HCT116 (cell line): ENCODE measurements at regions of chr3 and their contacts with region 1.

Region 1: DNA sequence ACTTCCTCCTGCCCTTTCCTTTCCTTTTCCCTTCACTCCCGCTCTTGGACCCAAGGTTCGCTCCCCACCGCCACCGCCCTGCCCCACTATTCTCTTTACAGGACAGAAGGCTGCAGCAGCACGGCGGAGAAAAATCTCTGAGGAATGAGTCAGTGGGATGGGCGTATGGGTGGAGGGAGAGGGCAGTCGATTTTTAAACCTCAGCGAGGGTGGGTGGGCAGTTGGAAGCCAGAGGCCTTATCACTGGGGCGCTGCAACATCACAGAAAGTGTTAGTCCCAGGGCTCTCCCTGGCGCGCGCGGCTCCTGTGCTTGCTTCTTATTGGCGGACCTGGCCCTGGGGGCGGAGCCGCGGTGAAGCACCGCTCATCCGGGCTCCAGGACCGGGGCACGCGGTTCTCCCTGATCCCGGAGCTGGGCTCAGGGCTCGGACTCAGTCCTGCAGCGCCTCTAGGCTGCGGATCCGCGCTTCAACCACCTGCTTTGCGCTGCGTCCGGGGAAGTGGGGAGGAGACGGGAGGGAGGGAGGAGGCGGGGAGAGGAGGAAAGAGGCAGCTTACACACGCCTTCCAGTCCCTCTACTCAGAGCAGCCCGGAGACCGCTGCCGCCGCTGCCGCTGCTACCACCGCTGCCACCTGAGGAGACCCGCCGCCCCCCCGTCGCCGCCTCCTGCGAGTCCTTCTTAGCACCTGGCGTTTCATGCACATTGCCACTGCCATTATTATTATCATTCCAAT is at the start of gene ALCAM:
- DNase-seq: peak; percentile 97
- ATAC-seq: peak; percentile 81
- H3K4me3 ChIP-seq: peak within 1 kb of the TSS; percentile 74 to 91
- H3K27ac ChIP-seq: peak within 1 kb of the TSS; percentile 78
- H3K4me1 ChIP-seq: peaks cover 13 to 49% of the 10 kb centered on the region in 2 experiments; a peak in 3 of 4 replicates
- H3K27me3 ChIP-seq: no peaks in the 10 kb centered on the region
- CTCF ChIP-seq: peak; percentile 52 to 78 (median 58)
- POLR2A ChIP-seq: no peak
- RAD21 ChIP-seq: peak; percentile 97
- total RNA-seq, gene ALCAM: 56.7 TPM

Region 2: GRCh38 chr3:103991461-103992115 is 1374.9 kb before region 1 on chr3:
- CTCF ChIA-PET with region 1: no interaction called
- POLR2A ChIA-PET with region 1: no interaction called
- RAD21 ChIA-PET with region 1: no interaction called
- intact Hi-C with region 1: loop called (anchors 5 kb)
- DNase-seq: peak; percentile 18
- ATAC-seq: peak; percentile 61; the same call in 1 of the 2 replicates
- H3K4me3 ChIP-seq: no peak overlapping the region
- H3K27ac ChIP-seq: no peak overlapping the region
- H3K4me1 ChIP-seq: no peaks in the 10 kb centered on the region
- H3K27me3 ChIP-seq: no peaks in the 10 kb centered on the region
- CTCF ChIP-seq: peak; percentile 34 to 86 (median 68); a peak in 5 of 6 replicates
- POLR2A ChIP-seq: no peak
- RAD21 ChIP-seq: peak; percentile 73

Region 3: GRCh38 chr3:104273046-104273649 is 1093.3 kb before region 1 on chr3:
- CTCF ChIA-PET with region 1: interaction called, 5 read pairs
- POLR2A ChIA-PET with region 1: no interaction called
- RAD21 ChIA-PET with region 1: interaction called in 1 of 2 experiments, 4 read pairs
- intact Hi-C with region 1: loop called (anchors 2 kb)
- DNase-seq: peak; percentile 19
- ATAC-seq: peak; percentile 63
- H3K4me3 ChIP-seq: no peak overlapping the region
- H3K27ac ChIP-seq: no peak overlapping the region
- H3K4me1 ChIP-seq: no peaks in the 10 kb centered on the region
- H3K27me3 ChIP-seq: no peaks in the 10 kb centered on the region
- CTCF ChIP-seq: peak; percentile 25 to 78 (median 68); a peak in 5 of 6 replicates
- POLR2A ChIP-seq: no peak
- RAD21 ChIP-seq: peak; percentile 75

Region 4: GRCh38 chr3:104596551-104596950 is 769.9 kb before region 1 on chr3:
- CTCF ChIA-PET with region 1: interaction called, 8 read pairs
- POLR2A ChIA-PET with region 1: interaction called, 3 read pairs
- RAD21 ChIA-PET with region 1: no interaction called
- intact Hi-C with region 1: loop called (anchors 2 kb)
- DNase-seq: peak; percentile 45
- ATAC-seq: peak; percentile 95
- H3K4me3 ChIP-seq: no peak overlapping the region
- H3K27ac ChIP-seq: no peak overlapping the region
- H3K4me1 ChIP-seq: no peaks in the 10 kb centered on the region
- H3K27me3 ChIP-seq: no peaks in the 10 kb centered on the region
- CTCF ChIP-seq: peak; percentile 38 to 70 (median 49); a peak in 5 of 6 replicates
- POLR2A ChIP-seq: no peak
- RAD21 ChIP-seq: peak; percentile 62

Region 5: DNA sequence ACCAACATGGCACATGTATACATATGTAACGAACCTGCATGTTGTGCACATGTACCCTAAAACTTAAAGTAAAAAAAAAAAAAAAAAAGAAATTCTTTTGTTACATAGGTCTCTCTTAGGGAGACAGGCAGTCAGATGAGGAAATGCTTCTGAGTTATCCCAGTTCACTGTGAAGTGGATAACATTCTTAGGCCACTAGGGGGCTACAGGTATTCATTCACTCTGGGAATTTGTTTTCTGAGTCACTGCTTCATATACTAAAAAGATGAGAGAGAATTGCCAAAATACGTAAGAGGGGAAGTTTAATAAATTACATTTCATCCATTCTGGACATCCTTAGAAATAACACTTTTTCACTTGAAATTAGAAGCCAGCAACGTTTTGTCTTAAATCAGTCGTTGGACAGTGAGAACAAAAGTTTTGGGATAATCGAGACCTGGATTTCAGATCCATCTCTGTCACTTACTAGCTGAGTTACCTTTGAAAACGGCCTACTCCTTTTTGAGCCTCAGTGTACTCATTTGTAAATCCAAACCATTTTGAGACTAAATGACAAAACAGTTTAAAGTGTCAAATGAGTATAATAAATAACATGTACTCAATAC is 738.2 kb before region 1 on chr3:
- CTCF ChIA-PET with region 1: interaction called, 3 read pairs
- POLR2A ChIA-PET with region 1: no interaction called
- RAD21 ChIA-PET with region 1: no interaction called
- intact Hi-C with region 1: loop called (anchors 2 kb)
- DNase-seq: peak; percentile 33
- ATAC-seq: peak; percentile 87
- H3K4me3 ChIP-seq: no peak overlapping the region
- H3K27ac ChIP-seq: no peak overlapping the region
- H3K4me1 ChIP-seq: peaks cover 0 to 13% of the 10 kb centered on the region in 2 experiments; a peak in 3 of 4 replicates
- H3K27me3 ChIP-seq: no peaks in the 10 kb centered on the region
- CTCF ChIP-seq: peak; percentile 39 to 70 (median 68); a peak in 5 of 6 replicates
- POLR2A ChIP-seq: no peak
- RAD21 ChIP-seq: peak; percentile 61

Region 6: DNA sequence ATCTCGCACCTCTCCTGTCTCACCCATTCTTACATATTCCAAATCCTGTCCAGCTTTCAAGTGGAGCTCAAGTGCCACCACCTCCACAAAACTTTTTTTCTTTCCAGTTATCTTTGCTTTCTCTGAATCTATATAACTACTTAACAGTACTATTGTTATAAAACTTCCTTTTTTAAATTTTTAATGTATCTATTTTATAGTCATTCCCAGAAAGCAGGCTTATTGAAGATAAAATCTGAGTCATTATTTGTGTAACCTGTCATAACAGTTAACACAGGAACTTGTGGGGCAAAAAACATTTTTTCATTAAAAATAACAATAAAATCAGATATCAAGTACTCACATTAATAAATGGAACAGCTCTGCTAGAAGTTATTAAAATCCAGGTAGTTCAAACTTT is 73.1 kb before region 1 on chr3:
- CTCF ChIA-PET with region 1: no interaction called
- POLR2A ChIA-PET with region 1: no interaction called
- RAD21 ChIA-PET with region 1: no interaction called
- intact Hi-C with region 1: no loop called
- DNase-seq: no peak
- ATAC-seq: no peak
- H3K4me3 ChIP-seq: no peak overlapping the region
- H3K27ac ChIP-seq: no peak overlapping the region
- H3K4me1 ChIP-seq: no peaks in the 10 kb centered on the region
- H3K27me3 ChIP-seq: no peaks in the 10 kb centered on the region
- CTCF ChIP-seq: no peak
- POLR2A ChIP-seq: no peak
- RAD21 ChIP-seq: no peak

Region 7: DNA sequence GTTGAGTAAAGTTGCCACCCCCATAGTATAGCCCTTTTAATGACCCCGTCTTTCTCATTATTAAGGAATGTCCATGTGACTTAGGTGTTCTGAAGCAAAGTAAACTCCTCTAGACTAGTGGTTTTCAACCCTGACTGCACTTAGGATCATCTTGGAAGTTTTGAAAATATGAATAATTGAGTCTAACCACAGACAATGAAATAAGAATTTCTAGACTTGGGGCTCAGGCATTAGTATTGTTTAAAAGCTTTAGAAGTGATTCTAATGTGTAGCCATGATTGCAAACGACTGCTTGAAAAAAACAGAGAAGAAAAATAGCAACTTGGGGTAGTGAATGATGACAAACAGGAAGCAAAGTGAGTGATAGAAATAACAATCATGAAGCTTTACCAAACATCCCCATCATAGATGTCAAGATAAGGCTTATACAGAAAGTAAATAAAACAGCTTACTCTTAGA is 35.2 kb after region 1 on chr3:
- CTCF ChIA-PET with region 1: no interaction called
- POLR2A ChIA-PET with region 1: interaction called, 3 read pairs
- RAD21 ChIA-PET with region 1: interaction called in 1 of 2 experiments, 3 read pairs
- intact Hi-C with region 1: loop called (anchors 2 kb)
- DNase-seq: peak; percentile 53
- ATAC-seq: peak; percentile 60
- H3K4me3 ChIP-seq: peak overlapping the region; percentile 28 to 52
- H3K27ac ChIP-seq: peak overlapping the region; percentile 87
- H3K4me1 ChIP-seq: peaks cover 33 to 58% of the 10 kb centered on the region in 2 experiments
- H3K27me3 ChIP-seq: no peaks in the 10 kb centered on the region
- CTCF ChIP-seq: no peak
- POLR2A ChIP-seq: no peak
- RAD21 ChIP-seq: peak; percentile 11; the same call in 1 of the 2 replicates

Region 8: GRCh38 chr3:106609666-106610301 is 1243.3 kb after region 1 on chr3:
- CTCF ChIA-PET with region 1: no interaction called
- POLR2A ChIA-PET with region 1: no interaction called
- RAD21 ChIA-PET with region 1: no interaction called
- intact Hi-C with region 1: loop called (anchors 2 kb)
- DNase-seq: peak; percentile 62
- ATAC-seq: peak; percentile 82
- H3K4me3 ChIP-seq: no peak overlapping the region
- H3K27ac ChIP-seq: no peak overlapping the region
- H3K4me1 ChIP-seq: no peaks in the 10 kb centered on the region
- H3K27me3 ChIP-seq: no peaks in the 10 kb centered on the region
- CTCF ChIP-seq: peak; percentile 55 to 86 (median 82); a peak in 5 of 6 replicates
- POLR2A ChIP-seq: no peak
- RAD21 ChIP-seq: peak; percentile 85